Astrocyte of the cerebellum (primary cell): ENCODE measurements at regions of chr6 and their contacts with region 1.

Region 1: GRCh38 chr6:33661106-33661838 is 40.1 kb downstream of the ITPR3 start:
- DNase-seq: no peak
- H3K4me3 ChIP-seq: no peak overlapping the region
- CTCF ChIP-seq: no peak

Region 2: DNA sequence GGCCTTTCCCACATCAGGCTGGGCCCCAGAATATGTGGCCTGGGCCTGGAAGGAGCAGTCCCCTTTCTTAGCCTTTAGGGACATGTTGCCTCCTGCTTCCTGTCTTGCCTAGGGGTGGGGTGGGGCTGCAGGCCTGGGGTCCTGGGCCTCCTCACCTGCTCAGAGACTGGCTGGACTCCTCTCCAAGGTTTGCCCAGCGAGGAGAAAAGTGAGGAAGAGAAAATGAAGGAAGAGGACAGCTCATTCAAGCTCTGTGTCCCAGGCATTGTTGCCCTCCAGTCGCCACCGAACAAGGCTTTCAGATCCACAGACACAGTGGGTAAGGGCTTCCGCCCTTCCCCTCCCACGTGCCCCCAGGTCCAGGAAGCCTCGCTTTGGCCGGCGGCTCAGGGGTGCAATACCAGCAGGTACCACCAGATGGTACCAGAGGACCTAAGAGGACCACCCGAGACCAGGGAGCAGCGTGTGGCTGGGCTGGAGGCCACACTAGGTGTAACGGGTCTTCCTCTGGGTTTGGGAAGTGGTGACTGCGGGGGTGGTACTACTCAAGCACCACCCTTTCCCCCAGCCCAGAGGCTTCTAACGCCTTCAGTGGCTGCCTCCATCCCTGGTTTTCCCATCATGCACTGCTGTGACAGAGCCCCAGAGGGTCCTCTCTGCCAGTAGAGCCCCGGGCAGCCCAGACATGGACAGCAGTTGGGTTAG is 75.7 kb before region 1 on chr6:
- in situ Hi-C with region 1: loop called (anchors 5 kb)
- DNase-seq: peak; percentile 33
- H3K4me3 ChIP-seq: no peak overlapping the region
- CTCF ChIP-seq: peak; percentile 97